ENCODE measurements at regions of chr12 and their contacts with region 1.

Region 1: DNA sequence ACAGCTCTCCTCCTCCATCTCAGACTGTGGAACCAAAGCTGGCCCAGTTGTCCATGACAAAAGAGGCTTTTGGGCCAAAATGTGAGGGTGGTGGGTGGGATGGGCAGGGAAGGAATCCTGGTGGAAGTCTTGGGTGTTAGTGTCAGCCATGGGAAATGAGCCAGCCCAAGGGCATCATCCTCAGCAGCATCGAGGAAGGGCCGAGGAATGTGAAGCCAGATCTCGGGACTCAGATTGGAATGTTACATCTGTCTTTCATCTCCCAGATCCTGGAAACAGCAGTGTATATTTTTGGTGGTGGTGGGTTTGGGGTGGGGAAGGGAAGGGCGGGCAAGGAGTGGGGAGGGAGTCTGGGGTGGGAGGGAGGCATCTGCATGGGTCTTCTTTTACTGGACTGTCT is 11.8 kb upstream of the TAMALIN start:
- DNase-seq: no peak
- ATAC-seq: no peak
- H3K4me3 ChIP-seq: no peak overlapping the region
- H3K4me3 Mint-ChIP-seq: no peak overlapping the region
- H3K27ac ChIP-seq: no peak overlapping the region
- H3K27ac Mint-ChIP-seq: no peak overlapping the region
- H3K4me1 ChIP-seq: peaks cover 3% of the 10 kb centered on the region
- H3K4me1 Mint-ChIP-seq: no peaks in the 10 kb centered on the region
- H3K27me3 ChIP-seq: no peaks in the 10 kb centered on the region
- H3K27me3 Mint-ChIP-seq: no peaks in the 10 kb centered on the region
- CTCF ChIP-seq: no peak

Region 2: DNA sequence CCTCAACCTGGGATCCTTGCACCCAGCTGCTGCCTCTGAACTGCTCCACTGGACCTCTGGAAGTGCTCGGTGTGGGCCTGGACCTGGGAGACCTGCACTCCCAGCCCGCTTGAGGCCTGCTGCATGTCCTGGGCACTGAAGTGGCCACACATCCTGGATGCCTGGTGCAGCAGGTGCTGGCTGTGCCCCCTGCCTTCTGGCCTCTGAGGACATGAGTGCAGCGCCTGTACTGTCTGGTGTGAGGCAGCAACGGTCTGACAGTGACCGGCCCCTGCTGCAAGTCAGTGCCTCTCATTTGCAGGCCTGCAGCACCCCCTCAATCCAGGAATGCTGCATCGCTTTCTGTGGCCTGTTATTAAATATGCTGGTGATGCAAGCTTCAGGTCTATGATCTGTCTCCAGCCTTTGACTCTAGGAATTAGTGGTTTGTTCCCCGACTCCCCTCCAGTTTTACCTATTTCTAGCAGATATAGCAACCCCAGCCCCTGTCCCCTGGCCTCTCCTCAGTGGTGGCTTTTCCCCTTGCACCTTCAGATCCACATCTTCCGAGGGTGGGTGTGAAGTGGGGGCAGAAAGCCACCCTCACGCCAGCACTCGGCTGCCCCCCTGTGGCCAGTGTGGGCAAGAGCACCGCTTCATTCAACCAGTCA is 88.2 kb after region 1 on chr12:
- CTCF ChIA-PET with region 1: interaction called, 5 read pairs
- POLR2A ChIA-PET with region 1: no interaction called
- intact Hi-C with region 1: loop called in 1 of 2 experiments (anchors 1 kb)
- DNase-seq: peak; percentile 49 to 83 (median 58)
- ATAC-seq: peak; percentile 83
- H3K4me3 ChIP-seq: no peak overlapping the region
- H3K4me3 Mint-ChIP-seq: no peak overlapping the region
- H3K27ac ChIP-seq: no peak overlapping the region
- H3K27ac Mint-ChIP-seq: no peak overlapping the region
- H3K4me1 ChIP-seq: peaks cover 18% of the 10 kb centered on the region
- H3K4me1 Mint-ChIP-seq: peaks cover 16% of the 10 kb centered on the region
- H3K27me3 ChIP-seq: peaks cover 0 to 4% of the 10 kb centered on the region in 2 experiments
- H3K27me3 Mint-ChIP-seq: peaks cover 8% of the 10 kb centered on the region
- CTCF ChIP-seq: peak; percentile 99

Measured in CD4-positive, alpha-beta T cell (primary cell).